Activated CD4-positive, alpha-beta T cell treated with anti-CD3 and anti-CD28 coated beads for 36 hours (primary cell): ENCODE measurements at regions of chr11 and their contacts with region 1.

Region 1: GRCh38 chr11:68402355-68403031 is 58.1 kb upstream of the PPP6R3 start:
- DNase-seq: peak; percentile 27
- ATAC-seq: no peak
- H3K4me3 Mint-ChIP-seq: no peak overlapping the region
- H3K27ac Mint-ChIP-seq: no peak overlapping the region
- H3K4me1 Mint-ChIP-seq: no peaks in the 10 kb centered on the region
- H3K27me3 Mint-ChIP-seq: no peaks in the 10 kb centered on the region

Region 2: DNA sequence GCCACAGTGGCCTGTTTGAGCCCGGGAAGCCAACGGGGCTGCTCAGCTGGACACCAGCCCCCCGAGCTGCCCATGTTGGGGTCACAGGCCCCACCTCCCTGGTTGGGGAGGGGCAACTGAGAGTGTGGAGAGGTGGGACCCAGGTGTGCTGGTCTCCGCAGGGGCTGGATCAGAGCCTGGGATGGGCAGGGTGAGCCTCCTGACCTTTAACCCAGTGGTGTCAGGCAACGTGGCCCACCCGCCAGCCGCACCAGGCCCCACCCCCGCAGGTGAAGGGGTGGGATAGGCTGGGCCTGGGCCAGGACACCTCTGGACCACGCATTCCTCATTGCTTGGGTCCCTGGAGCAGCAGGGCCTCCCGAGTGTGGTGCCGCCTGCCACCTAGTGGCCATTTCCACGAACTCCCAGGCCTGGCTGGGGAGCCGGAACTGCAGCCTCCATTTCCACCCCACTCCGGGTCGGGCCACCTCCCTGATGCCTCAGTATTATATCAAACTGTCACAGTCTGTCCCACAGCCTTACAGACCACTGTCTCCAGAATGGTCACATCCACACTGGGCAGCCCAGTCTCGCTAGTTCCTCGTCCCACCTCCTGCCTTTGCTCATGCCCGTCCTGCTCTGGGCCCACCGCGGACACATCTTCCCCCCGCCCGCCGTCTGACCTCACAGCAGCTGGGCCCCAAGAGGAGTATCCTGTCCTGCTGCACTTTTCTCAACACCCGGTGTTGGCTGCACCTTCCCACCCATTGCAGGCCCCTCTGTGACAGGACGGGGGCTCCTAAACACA is 44.7 kb after region 1 on chr11:
- CTCF ChIA-PET with region 1: no interaction called
- POLR2A ChIA-PET with region 1: no interaction called
- intact Hi-C with region 1: loop called in 1 of 2 experiments (anchors 1 kb)
- DNase-seq: peak; percentile 88
- ATAC-seq: peak; percentile 99
- H3K4me3 Mint-ChIP-seq: no peak overlapping the region
- H3K27ac Mint-ChIP-seq: no peak overlapping the region
- H3K4me1 Mint-ChIP-seq: peaks cover 8% of the 10 kb centered on the region
- H3K27me3 Mint-ChIP-seq: no peaks in the 10 kb centered on the region